Activated naive CD4-positive, alpha-beta T cell treated with anti-CD3 and anti-CD28 coated beads for 36 hours (primary cell): ENCODE measurements at regions of chr1 and their contacts with region 1.

Region 1: GRCh38 chr1:178501705-178502329 is 5.1 kb upstream of the CLEC20A start:
- DNase-seq: peak; percentile 75
- H3K4me3 Mint-ChIP-seq: no peak overlapping the region
- H3K27ac Mint-ChIP-seq: no peak overlapping the region
- H3K4me1 Mint-ChIP-seq: no peaks in the 10 kb centered on the region
- H3K27me3 Mint-ChIP-seq: peaks cover 2% of the 10 kb centered on the region

Region 2: GRCh38 chr1:178300352-178300699 is 201.5 kb before region 1 on chr1:
- CTCF ChIA-PET with region 1: interaction called, 15 read pairs
- intact Hi-C with region 1: loop called (anchors 2 kb)
- DNase-seq: no peak
- H3K4me3 Mint-ChIP-seq: no peak overlapping the region
- H3K27ac Mint-ChIP-seq: no peak overlapping the region
- H3K4me1 Mint-ChIP-seq: no peaks in the 10 kb centered on the region
- H3K27me3 Mint-ChIP-seq: peaks cover 4% of the 10 kb centered on the region

Region 3: GRCh38 chr1:178513278-178514022 is 11.6 kb after region 1 on chr1:
- CTCF ChIA-PET with region 1: interaction called, 20 read pairs
- intact Hi-C with region 1: no loop called
- DNase-seq: no peak
- H3K4me3 Mint-ChIP-seq: no peak overlapping the region
- H3K27ac Mint-ChIP-seq: no peak overlapping the region
- H3K4me1 Mint-ChIP-seq: no peaks in the 10 kb centered on the region
- H3K27me3 Mint-ChIP-seq: no peaks in the 10 kb centered on the region